ENCODE measurements at regions of chr3 and their contacts with region 1.

Region 1: DNA sequence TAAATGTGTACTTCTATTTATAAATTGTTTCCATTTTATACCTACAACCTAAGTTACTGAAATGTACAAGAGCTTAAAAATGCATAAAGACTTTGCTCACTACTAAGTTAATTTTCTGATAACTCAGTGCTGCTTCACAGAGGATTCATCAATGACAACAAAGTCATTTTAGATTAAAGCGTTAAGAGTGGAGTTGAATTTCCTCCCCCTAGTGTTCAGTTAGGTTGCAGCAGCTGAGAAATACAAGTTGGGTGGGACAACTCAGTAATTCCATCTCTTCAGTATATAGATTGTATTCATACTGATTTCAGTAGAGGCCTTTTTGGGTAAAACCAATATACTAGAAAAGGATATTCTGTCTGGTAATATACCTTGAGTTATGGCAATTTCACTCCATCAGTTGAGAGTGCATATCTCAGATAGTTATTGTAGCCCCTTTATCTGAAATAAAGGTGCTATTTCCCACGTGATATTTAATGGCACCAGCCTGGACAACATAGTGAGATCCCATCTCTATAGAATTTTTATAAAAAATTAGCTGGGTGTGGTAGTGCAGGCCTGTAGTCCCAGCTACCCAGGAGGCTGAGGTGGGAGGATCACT is 6.9 kb upstream of the RPL35A start:
- DNase-seq: no peak
- H3K4me3 Mint-ChIP-seq: no peak overlapping the region
- H3K27ac Mint-ChIP-seq: no peak overlapping the region
- H3K4me1 Mint-ChIP-seq: peaks cover 6% of the 10 kb centered on the region
- H3K27me3 Mint-ChIP-seq: no peaks in the 10 kb centered on the region

Region 2: GRCh38 chr3:197758512-197758911 is 184.5 kb before region 1 on chr3:
- CTCF ChIA-PET with region 1: no interaction called
- POLR2A ChIA-PET with region 1: no interaction called
- DNase-seq: no peak
- H3K4me3 Mint-ChIP-seq: no peak overlapping the region
- H3K27ac Mint-ChIP-seq: no peak overlapping the region
- H3K4me1 Mint-ChIP-seq: peaks cover 12% of the 10 kb centered on the region
- H3K27me3 Mint-ChIP-seq: no peaks in the 10 kb centered on the region

Region 3: GRCh38 chr3:197926418-197926817 is 16.6 kb before region 1 on chr3:
- CTCF ChIA-PET with region 1: interaction called, 10 read pairs
- POLR2A ChIA-PET with region 1: no interaction called
- DNase-seq: no peak
- H3K4me3 Mint-ChIP-seq: no peak overlapping the region
- H3K27ac Mint-ChIP-seq: no peak overlapping the region
- H3K4me1 Mint-ChIP-seq: peaks cover 10% of the 10 kb centered on the region
- H3K27me3 Mint-ChIP-seq: no peaks in the 10 kb centered on the region